Activated CD4-positive, alpha-beta memory T cell treated with anti-CD3 and anti-CD28 coated beads for 36 hours (primary cell): ENCODE measurements at regions of chr17 and their contacts with region 1.

Region 1: GRCh38 chr17:7614422-7615264 is at the start of gene FXR2:
- DNase-seq: peak; percentile 100
- H3K4me3 Mint-ChIP-seq: peak within 1 kb of the TSS; percentile 87
- H3K27ac Mint-ChIP-seq: peak within 1 kb of the TSS; percentile 87
- H3K4me1 Mint-ChIP-seq: peaks cover 31% of the 10 kb centered on the region
- H3K27me3 Mint-ChIP-seq: no peaks in the 10 kb centered on the region
- total RNA-seq, gene FXR2: 37.5 to 40.1 TPM

Region 2: DNA sequence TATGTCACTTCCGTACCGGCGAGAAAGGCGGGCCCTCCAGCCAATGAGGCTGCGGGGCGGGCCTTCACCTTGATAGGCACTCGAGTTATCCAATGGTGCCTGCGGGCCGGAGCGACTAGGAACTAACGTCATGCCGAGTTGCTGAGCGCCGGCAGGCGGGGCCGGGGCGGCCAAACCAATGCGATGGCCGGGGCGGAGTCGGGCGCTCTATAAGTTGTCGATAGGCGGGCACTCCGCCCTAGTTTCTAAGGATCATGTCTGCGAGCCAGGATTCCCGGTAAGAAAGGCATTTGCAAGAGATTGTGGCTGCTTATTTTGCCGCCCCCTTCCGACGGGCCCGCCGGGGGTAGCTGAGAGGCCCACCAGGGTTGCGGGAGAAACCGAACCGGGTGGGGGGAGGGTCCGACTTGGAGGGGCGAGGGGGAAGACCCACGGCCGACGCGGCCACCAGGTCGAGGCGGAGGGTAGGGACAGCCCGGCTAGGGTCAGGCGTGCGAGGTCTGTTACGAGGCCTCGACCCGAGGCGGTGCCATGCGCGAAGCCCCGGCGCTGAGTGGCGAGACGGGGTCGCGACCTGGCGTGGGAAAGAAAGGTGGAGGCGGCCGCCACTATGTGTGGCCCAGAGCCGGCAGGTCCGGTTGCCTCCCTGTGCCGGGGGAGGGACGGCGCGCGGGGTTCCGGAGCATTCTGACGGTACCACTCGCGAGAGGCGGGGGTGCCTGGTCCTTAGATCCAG is 41.9 kb before region 1 on chr17:
- CTCF ChIA-PET with region 1: no interaction called
- POLR2A ChIA-PET with region 1: no interaction called
- intact Hi-C with region 1: loop called (anchors 1 kb)
- DNase-seq: peak; percentile 100
- H3K4me3 Mint-ChIP-seq: peak overlapping the region; percentile 99
- H3K27ac Mint-ChIP-seq: peak overlapping the region; percentile 100
- H3K4me1 Mint-ChIP-seq: peaks cover 50% of the 10 kb centered on the region
- H3K27me3 Mint-ChIP-seq: peaks cover 2% of the 10 kb centered on the region

Region 3: GRCh38 chr17:7583253-7584109 is 31.2 kb before region 1 on chr17 and contains the start of gene MPDU1:
- CTCF ChIA-PET with region 1: interaction called, 4 read pairs
- POLR2A ChIA-PET with region 1: interaction called, 13 read pairs
- intact Hi-C with region 1: loop called (anchors 1 kb)
- DNase-seq: peak; percentile 98
- H3K4me3 Mint-ChIP-seq: peak within 1 kb of the TSS; percentile 95
- H3K27ac Mint-ChIP-seq: peak within 1 kb of the TSS; percentile 100
- H3K4me1 Mint-ChIP-seq: peaks cover 57% of the 10 kb centered on the region
- H3K27me3 Mint-ChIP-seq: no peaks in the 10 kb centered on the region
- total RNA-seq, gene MPDU1: 52.6 to 52.9 TPM

Region 4: DNA sequence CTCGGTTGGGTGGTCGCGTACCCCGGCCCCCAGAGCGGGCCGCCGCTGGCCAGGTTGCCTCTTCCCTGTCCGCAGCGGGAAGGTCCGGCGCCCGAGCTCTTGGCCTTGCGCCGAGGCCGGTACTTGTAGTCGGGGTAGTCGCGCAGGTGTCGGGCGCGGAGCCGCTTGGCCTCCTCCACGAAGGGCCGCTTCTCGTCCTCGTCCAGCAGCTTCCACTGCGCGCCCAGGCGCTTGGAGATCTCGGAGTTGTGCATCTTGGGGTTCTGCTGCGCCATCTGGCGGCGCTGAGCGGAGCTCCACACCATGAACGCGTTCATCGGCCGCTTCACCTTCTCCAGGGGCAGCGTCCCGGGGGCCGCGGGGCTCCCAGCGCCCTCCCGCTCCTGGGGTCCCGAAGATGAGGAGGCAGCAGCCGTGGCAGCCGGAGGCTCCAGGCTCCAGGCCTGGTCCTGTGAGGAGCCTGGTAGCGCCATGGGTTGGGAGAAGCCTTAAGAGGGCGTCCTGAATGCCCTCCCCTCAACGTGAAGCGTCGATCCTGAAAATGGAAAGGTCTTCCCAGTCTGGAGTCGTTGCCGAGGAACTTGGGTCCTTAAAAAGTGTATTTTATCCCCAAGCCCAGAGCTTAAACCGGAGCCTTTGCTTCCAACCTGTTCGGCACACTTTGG is 25.3 kb before region 1 on chr17:
- CTCF ChIA-PET with region 1: interaction called, 17 read pairs
- POLR2A ChIA-PET with region 1: interaction called, 13 read pairs
- intact Hi-C with region 1: loop called (anchors 1 kb)
- DNase-seq: peak; percentile 74
- H3K4me3 Mint-ChIP-seq: no peak overlapping the region
- H3K27ac Mint-ChIP-seq: no peak overlapping the region
- H3K4me1 Mint-ChIP-seq: peaks cover 10% of the 10 kb centered on the region
- H3K27me3 Mint-ChIP-seq: no peaks in the 10 kb centered on the region

Region 5: DNA sequence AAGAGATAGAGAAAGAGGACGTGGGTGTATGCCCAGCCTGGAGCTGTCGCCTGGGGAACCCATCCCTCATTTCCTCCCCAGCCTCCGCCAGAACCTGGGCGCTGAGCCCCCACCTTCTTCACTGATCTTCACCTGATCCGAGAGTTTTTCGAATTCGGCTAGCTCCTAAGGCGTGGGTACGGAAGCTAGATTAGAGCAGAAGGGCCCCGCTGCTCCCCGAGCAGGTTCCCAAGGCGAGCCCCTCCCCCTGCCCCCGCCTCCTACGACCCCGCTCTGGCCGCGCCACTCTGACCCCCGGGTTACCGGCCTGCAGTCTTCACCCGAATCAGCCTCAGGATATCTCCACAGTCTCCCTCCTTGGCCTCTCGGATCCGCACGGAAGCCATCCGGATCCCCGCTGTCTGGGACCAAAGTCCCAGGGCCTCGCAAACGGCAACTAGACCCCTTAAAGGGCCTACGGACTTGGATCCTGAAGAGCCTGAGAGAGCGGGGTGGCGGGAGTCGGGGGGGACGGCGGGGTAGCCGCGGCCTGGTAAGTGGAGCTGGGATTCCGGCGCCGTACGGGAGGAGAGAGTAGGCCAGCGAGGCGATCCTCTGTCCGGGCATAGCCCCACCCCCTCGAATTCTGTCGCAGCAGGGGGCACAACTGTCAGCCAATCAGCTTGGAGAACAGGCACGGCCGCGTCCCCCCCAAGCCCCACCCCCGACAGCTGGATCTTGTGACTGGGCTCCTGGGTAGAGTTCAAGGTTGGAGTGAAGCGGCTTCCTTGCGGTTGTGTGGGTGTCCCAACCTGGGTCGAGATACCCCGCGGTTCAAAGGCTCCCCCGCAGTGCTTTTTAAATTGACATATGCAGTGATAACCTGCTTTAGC is 12.8 kb after region 1 on chr17 and contains the start of gene SAT2:
- CTCF ChIA-PET with region 1: interaction called, 16 read pairs
- POLR2A ChIA-PET with region 1: interaction called, 7 read pairs
- intact Hi-C with region 1: loop called (anchors 1 kb)
- DNase-seq: peak; percentile 92
- H3K4me3 Mint-ChIP-seq: peak within 1 kb of the TSS; percentile 89
- H3K27ac Mint-ChIP-seq: peak within 1 kb of the TSS; percentile 58
- H3K4me1 Mint-ChIP-seq: peaks cover 11% of the 10 kb centered on the region
- H3K27me3 Mint-ChIP-seq: no peaks in the 10 kb centered on the region
- total RNA-seq, gene SAT2: 27.4 to 28.2 TPM

Region 6: DNA sequence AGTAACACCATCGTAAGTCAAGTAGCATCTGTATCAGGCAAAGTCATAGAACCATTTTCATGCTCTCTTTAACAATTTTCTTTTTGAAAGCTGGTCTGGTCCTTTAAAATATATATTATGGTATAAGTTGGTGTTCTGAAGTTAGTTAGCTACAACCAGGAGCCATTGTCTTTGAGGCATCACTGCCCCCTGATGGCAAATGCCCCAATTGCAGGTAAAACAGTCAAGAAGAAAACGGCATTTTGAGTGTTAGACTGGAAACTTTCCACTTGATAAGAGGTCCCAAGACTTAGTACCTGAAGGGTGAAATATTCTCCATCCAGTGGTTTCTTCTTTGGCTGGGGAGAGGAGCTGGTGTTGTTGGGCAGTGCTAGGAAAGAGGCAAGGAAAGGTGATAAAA is 58.6 kb after region 1 on chr17:
- CTCF ChIA-PET with region 1: interaction called, 10 read pairs
- POLR2A ChIA-PET with region 1: no interaction called
- intact Hi-C with region 1: no loop called
- DNase-seq: peak; percentile 68
- H3K4me3 Mint-ChIP-seq: no peak overlapping the region
- H3K27ac Mint-ChIP-seq: no peak overlapping the region
- H3K4me1 Mint-ChIP-seq: no peaks in the 10 kb centered on the region
- H3K27me3 Mint-ChIP-seq: no peaks in the 10 kb centered on the region

Region 7: GRCh38 chr17:7844292-7845154 is 229.9 kb after region 1 on chr17:
- CTCF ChIA-PET with region 1: no interaction called
- POLR2A ChIA-PET with region 1: no interaction called
- intact Hi-C with region 1: loop called (anchors 1 kb)
- DNase-seq: peak; percentile 92
- H3K4me3 Mint-ChIP-seq: peak overlapping the region; percentile 85
- H3K27ac Mint-ChIP-seq: peak overlapping the region; percentile 95
- H3K4me1 Mint-ChIP-seq: peaks cover 45% of the 10 kb centered on the region
- H3K27me3 Mint-ChIP-seq: no peaks in the 10 kb centered on the region